Left colon (tissue), 2 donors: ENCODE measurements at regions of chr14 and their contacts with region 1.

Region 1: GRCh38 chr14:23186913-23187654 is 3.6 kb upstream of the SLC7A8 start:
- DNase-seq: peak in 1 of 2 donors; percentile 36
- ATAC-seq: peak; percentile 62

Region 2: DNA sequence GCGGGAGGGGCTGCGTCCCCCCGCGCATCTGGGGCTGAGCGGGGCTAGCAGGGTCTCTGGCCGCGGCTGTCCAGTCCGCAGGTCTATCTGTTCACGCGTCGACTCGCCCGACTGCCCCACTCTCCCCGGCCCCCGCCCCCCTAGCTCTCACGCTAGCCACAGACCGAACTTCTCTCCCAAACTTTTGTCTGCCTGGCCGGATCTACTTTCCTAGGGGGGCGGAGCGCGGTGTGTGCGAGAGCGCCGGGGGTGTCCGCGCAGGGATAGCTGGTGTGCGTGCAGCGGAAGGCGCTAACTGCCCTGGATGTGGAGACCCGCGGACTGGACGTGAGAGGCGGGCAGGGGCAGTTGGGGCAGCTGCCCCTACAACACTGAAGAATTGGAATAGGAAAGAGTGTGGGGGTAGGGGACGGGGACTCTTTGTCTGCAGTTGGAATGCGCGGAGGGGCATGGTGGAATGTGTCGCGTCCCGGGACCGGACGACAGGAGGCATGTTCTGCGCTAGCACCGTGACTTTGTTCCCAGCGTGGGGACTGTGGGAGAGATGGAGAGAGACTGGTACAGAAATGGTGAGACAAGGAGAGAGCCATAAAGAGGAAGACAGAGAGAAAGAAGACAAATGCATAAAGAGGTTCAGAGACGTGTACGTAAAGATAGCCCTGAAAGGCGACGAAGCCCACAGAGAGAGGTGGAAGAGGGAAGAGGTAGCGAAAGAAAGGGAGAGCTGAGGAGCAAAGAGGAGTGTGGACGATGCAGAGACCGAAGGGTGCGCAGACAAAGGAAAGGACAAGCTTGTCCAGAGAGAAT is 204.4 kb before region 1 on chr14 and contains the start of gene AJUBA:
- intact Hi-C with region 1: no loop called
- DNase-seq: peak; percentile 88 to 90
- ATAC-seq: peak; percentile 75
- total RNA-seq, gene AJUBA: 1.4 to 4.1 TPM

Region 3: DNA sequence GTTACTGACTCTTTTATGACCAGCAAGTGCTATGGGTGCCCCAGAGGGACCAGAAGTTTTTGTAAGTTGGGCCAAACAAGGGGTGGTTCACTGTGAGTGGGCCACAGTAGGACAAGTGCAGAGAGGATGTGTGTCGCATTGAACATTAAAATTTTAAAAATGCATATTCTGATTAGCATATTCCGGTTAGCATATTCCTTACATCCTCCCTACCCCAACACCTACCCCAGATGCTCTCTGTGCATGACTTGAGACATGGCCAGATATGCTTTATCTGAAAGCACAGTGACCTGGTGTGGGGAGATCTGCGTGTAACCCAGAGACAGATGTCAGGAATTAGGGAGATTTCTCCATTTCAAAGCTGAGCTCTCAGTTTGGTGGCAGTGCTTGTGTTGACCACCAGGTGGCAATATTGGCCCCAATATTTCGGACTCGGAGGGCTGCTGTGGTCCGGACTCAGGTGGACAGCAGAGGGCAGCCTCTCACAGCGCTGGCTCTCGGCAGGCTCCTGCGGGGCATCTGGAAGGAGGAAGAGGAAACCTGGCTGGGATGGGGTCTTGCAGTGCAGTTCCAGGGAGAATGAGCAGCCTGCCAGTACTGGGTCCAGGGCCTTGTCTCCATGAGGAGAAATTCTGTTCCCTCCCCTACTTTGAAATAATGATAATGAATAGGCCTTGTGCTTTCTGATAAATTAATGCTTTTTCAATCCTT is 66.4 kb before region 1 on chr14:
- intact Hi-C with region 1: loop called (anchors 2 to 5 kb)
- DNase-seq: peak; percentile 83 to 91
- ATAC-seq: peak; percentile 78